HCT116 (cell line): ENCODE measurements at regions of chr7 and their contacts with region 1.

Region 1: GRCh38 chr7:26365077-26365900 is 73.6 kb downstream of the SNX10 start:
- DNase-seq: peak; percentile 51
- ATAC-seq: peak; percentile 84
- H3K4me3 ChIP-seq: no peak overlapping the region
- H3K27ac ChIP-seq: no peak overlapping the region
- H3K4me1 ChIP-seq: no peaks in the 10 kb centered on the region
- H3K27me3 ChIP-seq: no peaks in the 10 kb centered on the region
- CTCF ChIP-seq: peak; percentile 50 to 93 (median 74)
- POLR2A ChIP-seq: no peak
- RAD21 ChIP-seq: peak; percentile 98

Region 2: DNA sequence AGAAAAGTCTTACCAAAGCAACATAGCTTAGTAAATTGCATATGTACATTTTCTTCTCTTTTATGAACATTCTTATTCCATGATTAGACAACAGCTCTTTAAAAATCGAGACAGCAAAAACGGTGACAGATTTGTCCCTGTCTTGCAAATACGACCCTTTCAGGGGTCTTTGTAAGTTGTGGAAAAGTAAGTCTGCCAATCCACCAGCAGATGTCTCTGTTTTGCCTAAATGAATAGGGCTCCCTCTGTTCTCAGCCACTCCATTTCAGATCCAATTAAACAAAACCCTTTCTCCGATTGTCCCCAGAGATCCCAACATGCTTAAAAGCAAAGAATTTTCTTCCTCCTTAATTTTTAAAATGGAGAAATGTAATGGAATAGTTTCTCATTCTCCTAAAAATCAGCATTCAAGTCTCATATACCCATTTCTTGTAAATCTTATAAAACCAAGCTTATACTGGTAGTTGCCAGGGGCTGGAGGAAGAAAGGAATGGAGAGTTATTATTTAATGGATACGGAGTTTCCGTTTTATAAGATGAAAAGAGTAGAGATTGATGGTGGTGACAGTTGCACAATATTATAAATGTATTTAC is 274.3 kb before region 1 on chr7:
- CTCF ChIA-PET with region 1: interaction called, 18 read pairs
- POLR2A ChIA-PET with region 1: no interaction called
- RAD21 ChIA-PET with region 1: interaction called in 1 of 2 experiments, 7 read pairs
- intact Hi-C with region 1: loop called (anchors 1 kb)
- DNase-seq: peak; percentile 59
- ATAC-seq: peak; percentile 84
- H3K4me3 ChIP-seq: 0 out of 4 replicates have a peak overlapping the region, but pooled peaks of 1 of the 2 experiments have one; percentile 14
- H3K27ac ChIP-seq: no peak overlapping the region
- H3K4me1 ChIP-seq: peaks cover 0 to 3% of the 10 kb centered on the region in 2 experiments; a peak in 1 of 4 replicates
- H3K27me3 ChIP-seq: no peaks in the 10 kb centered on the region
- CTCF ChIP-seq: peak; percentile 63 to 82 (median 81)
- POLR2A ChIP-seq: no peak
- RAD21 ChIP-seq: peak; percentile 79

Region 3: DNA sequence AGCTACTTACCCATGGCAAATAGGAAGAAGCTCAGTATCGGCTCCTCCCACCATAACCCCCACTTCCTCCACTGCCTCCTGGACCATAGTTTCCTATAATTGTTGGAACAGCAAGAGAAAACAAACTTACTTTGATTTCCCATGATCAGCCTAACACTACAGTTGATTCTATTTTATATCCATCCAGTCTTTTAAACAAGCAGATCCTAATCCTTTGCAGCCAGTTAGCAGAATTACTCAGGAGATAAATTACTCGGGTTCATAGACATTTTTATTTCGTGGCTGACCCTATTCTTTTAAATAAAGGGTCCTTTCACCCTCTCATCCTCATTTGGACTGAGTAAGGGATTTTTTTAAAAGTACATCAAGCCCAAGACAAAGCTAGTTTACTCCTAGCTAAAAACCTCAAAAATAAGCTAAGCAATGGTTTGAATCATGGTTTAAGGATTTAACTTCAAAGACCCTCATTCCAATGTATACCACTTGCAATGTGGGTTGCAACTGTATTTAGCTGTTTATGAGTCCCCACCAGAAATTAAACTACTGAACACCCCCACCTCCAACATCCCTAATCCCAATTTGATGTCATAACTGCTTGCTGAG is 172.7 kb before region 1 on chr7:
- CTCF ChIA-PET with region 1: no interaction called
- POLR2A ChIA-PET with region 1: no interaction called
- RAD21 ChIA-PET with region 1: no interaction called
- intact Hi-C with region 1: no loop called
- DNase-seq: no peak
- ATAC-seq: no peak
- H3K4me3 ChIP-seq: no peak overlapping the region
- H3K27ac ChIP-seq: no peak overlapping the region
- H3K4me1 ChIP-seq: peaks cover 0 to 6% of the 10 kb centered on the region in 2 experiments; a peak in 2 of 4 replicates
- H3K27me3 ChIP-seq: no peaks in the 10 kb centered on the region
- CTCF ChIP-seq: no peak
- POLR2A ChIP-seq: no peak
- RAD21 ChIP-seq: no peak

Region 4: DNA sequence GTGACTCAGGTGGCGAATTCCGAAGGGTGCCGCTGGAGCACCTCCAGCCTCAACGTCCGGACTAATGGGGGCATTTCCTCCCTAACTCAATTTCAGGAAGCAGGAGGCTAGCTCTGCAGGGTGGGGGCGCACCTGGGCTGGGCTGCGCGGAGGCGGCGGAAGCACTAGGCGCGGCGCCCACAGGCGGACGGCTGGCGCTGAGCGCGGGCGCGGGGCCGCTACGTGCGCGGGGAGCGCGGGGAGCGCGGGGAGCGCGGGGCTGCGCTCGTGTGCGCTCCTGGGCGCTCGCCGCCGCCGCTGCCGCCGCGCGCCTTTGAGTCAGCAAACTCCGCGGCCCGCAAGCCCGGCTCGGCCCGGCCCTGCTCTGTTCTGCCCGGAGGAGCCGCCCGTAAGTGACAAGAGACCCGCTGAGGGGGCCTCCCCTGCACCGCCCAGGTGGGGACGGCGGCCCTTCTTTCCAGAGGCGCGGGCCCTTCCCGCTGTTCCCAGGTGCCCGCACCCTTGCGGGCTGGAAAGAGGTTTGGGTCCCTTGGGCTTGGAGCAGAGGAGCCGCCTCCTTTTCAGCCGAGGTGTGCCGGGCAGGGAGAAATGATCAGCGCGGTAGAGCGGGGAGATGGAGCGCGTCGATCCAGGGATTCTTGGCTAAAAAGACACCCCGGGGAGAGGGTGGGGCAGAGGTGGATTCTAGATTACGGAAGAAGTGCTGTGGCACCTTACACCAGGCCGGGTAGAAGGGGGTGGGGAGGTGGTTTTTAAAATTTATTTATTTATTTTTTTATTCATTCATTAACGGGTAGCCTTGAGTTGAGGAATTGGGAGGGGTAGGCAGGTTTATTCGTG is 73.4 kb before region 1 on chr7 and contains the start of gene SNX10:
- CTCF ChIA-PET with region 1: interaction called, 5 read pairs
- POLR2A ChIA-PET with region 1: no interaction called
- RAD21 ChIA-PET with region 1: interaction called in 1 of 2 experiments, 3 read pairs
- intact Hi-C with region 1: loop called (anchors 1 kb)
- DNase-seq: peak; percentile 42
- ATAC-seq: peak; percentile 95
- H3K4me3 ChIP-seq: peak within 1 kb of the TSS; percentile 62 to 80
- H3K27ac ChIP-seq: peak within 1 kb of the TSS; percentile 76
- H3K4me1 ChIP-seq: peaks cover 4 to 13% of the 10 kb centered on the region in 2 experiments; a peak in 2 of 4 replicates
- H3K27me3 ChIP-seq: no peaks in the 10 kb centered on the region
- CTCF ChIP-seq: peak; percentile 23 to 45 (median 39); a peak in 4 of 6 replicates
- POLR2A ChIP-seq: peak; percentile 63
- RAD21 ChIP-seq: peak; percentile 60
- total RNA-seq, gene SNX10: 26.9 TPM

Region 5: GRCh38 chr7:26385240-26385639 is 20.0 kb after region 1 on chr7:
- CTCF ChIA-PET with region 1: interaction called, 14 read pairs
- POLR2A ChIA-PET with region 1: no interaction called
- RAD21 ChIA-PET with region 1: no interaction called
- intact Hi-C with region 1: no loop called
- DNase-seq: no peak
- ATAC-seq: 0 out of 2 replicates have a peak, but pooled peaks have one; percentile 36
- H3K4me3 ChIP-seq: no peak overlapping the region
- H3K27ac ChIP-seq: no peak overlapping the region
- H3K4me1 ChIP-seq: no peaks in the 10 kb centered on the region
- H3K27me3 ChIP-seq: no peaks in the 10 kb centered on the region
- CTCF ChIP-seq: no peak
- POLR2A ChIP-seq: no peak
- RAD21 ChIP-seq: no peak

Region 6: DNA sequence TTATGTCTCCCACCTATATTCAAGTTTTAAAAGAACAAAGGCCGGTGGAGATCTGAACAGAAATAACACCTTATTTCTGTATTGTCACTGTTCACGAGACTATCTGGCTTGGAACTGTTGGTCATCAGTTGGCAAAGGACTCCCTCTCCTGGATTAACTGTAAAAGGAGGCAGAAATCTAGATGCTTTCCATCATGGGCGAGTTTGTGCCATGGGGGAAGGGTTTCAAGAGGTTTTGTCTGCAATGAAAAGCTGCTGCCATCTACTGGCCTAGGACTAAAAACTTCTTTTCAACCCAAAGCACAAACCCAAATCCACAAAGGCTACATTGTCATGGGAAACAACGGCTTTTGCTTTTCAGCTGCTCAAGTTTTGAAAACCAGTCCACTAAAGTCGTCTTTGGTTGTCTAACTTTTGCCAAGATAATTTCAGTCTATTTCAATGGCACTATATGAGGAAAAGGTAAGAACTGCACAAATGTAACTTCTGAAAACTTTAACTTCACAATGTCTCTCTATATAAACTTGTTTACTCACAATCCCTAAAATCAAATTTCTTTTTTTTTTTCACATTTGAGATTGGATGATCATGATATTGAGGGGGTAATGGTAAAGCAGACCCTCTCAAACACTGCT is 302.3 kb after region 1 on chr7:
- CTCF ChIA-PET with region 1: interaction called, 232 read pairs
- POLR2A ChIA-PET with region 1: interaction called, 5 read pairs
- RAD21 ChIA-PET with region 1: interaction called, 17 to 28 read pairs
- intact Hi-C with region 1: loop called (anchors 1 kb)
- DNase-seq: peak; percentile 94
- ATAC-seq: peak; percentile 100
- H3K4me3 ChIP-seq: no peak overlapping the region
- H3K27ac ChIP-seq: no peak overlapping the region
- H3K4me1 ChIP-seq: 0 out of 4 replicates have a peak, but pooled peaks cover 0 to 2% of the 10 kb centered on the region in 2 experiments
- H3K27me3 ChIP-seq: no peaks in the 10 kb centered on the region
- CTCF ChIP-seq: peak; percentile 82 to 99 (median 96)
- POLR2A ChIP-seq: no peak
- RAD21 ChIP-seq: peak; percentile 100

Region 7: DNA sequence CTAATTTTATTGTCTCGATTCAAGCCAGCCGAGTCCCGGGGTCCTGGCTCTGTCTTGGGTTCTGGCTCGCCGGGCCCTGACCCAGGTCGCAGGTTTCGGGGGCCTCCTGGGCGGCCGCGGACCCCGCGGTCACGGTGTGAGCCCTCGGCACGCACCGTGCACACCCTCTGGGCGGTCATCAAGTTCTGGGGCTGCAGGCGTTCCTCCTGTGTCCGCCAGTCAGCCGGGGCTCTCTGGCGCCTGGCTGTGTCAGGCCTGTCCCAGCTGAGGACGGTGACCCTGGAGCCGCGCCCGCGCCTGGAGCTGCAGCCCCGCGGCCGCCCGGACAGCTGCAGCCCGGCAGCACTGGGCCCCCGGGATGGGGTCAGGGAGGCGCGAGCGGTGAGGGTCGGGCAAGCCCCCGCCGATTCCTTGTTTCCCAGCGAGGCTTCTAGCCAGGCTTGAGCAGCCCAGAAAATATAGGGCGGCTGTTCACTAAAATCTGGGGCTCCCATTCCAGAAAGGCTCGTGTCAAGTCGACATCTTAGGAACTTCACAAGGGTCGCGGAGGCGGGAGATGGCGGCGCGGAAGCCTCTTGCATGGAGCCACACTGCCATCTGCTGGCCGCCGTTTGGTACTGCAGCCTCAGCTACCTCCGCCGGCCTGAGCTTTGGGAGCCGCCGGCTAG is 795.4 kb after region 1 on chr7:
- CTCF ChIA-PET with region 1: interaction called, 62 read pairs
- POLR2A ChIA-PET with region 1: interaction called, 3 read pairs
- RAD21 ChIA-PET with region 1: interaction called, 5 to 12 read pairs
- intact Hi-C with region 1: loop called (anchors 1 kb)
- DNase-seq: no peak
- ATAC-seq: peak; percentile 41
- H3K4me3 ChIP-seq: peak overlapping the region; percentile 49 to 77
- H3K27ac ChIP-seq: peak overlapping the region; percentile 91
- H3K4me1 ChIP-seq: peaks cover 14 to 53% of the 10 kb centered on the region in 2 experiments
- H3K27me3 ChIP-seq: no peaks in the 10 kb centered on the region
- CTCF ChIP-seq: peak in 2 of 3 experiments; percentile 89 to 95; a peak in 4 of 6 replicates
- POLR2A ChIP-seq: no peak
- RAD21 ChIP-seq: no peak